ENCODE measurements at regions of chr6 and their contacts with region 1.

Region 1: GRCh38 chr6:159979136-159979874 is 10.4 kb downstream of the IGF2R start:
- DNase-seq: peak; percentile 82
- H3K4me3 Mint-ChIP-seq: peak overlapping the region; percentile 73
- H3K27ac Mint-ChIP-seq: peak overlapping the region; percentile 98
- H3K4me1 Mint-ChIP-seq: peaks cover 95% of the 10 kb centered on the region
- H3K27me3 Mint-ChIP-seq: no peaks in the 10 kb centered on the region

Region 2: DNA sequence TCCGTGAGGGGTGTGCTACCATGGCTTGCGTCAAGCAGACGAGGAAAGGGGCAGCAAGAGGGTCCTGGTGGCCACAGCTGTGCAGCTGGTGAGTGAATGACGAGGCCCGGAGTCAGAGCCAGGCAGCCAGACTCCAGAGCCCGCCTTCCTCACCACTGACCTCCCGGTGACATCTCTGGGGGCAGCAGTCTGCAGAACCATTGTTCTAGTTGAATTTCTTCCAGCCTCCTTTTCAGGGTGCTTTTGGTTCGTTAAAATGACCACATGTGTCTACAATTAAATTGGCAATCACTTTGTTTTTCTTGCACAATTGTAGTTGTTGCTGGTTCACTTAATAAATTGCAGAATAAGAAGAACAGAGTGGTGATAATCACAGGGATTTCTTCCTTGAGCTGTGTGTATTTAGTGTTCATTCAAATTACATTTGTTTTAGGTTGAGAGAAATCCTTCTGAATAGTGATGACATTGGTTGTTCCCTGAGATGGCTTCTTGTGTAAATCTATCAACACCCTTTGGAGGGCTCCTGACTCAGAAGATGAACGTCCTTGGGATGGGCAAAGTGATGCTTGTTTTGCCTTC is 1570.7 kb before region 1 on chr6:
- CTCF ChIA-PET with region 1: no interaction called
- POLR2A ChIA-PET with region 1: no interaction called
- intact Hi-C with region 1: no loop called
- DNase-seq: no peak
- H3K4me3 Mint-ChIP-seq: no peak overlapping the region
- H3K27ac Mint-ChIP-seq: no peak overlapping the region
- H3K4me1 Mint-ChIP-seq: no peaks in the 10 kb centered on the region
- H3K27me3 Mint-ChIP-seq: no peaks in the 10 kb centered on the region

Region 3: DNA sequence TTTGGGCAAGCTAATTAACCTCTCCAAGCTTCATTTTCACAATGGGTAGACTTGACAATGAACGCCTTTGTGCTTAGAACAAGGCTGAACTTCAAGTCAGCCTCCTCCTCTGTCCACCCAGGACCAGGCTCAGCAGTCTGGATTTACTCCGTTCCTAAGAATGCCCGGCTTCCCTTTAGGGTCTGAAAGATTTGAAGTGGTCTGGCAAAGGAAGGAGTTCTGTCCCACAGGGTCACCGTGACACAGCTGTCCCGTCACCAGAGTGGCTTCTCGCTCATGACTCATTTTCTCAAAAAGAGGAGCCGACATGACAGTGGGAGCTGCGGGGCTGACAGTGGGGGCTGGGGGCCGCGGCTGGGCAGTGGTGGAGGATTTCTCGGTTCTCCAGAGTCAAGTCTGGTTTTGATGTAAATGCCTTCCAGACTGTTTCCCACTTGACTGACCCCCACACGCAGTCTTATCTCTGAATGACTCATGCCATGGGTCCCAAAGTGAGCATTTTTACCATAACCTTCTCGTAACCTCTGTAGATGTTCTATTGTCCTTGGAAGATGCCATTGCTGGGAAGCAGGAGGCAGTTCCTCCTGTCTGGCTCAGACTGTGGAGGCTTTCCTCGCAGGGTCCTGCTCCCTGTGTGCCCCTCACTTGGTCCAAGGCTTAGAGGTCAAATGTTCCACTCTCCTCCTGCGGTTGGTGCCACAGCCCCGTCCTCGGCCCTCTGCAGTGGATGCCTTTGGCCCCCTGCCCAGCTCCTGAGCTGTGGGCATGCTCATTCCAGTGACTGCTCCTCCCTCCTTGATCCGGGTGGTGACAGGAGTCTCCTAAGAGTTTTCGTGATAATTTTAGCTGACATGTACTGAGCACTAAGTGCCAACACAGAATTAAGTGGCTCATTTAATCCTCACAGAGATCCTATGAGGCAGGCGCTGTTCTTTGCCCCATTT is 557.0 kb before region 1 on chr6:
- CTCF ChIA-PET with region 1: no interaction called
- POLR2A ChIA-PET with region 1: no interaction called
- intact Hi-C with region 1: no loop called
- DNase-seq: no peak
- H3K4me3 Mint-ChIP-seq: no peak overlapping the region
- H3K27ac Mint-ChIP-seq: no peak overlapping the region
- H3K4me1 Mint-ChIP-seq: no peaks in the 10 kb centered on the region
- H3K27me3 Mint-ChIP-seq: peaks cover 5% of the 10 kb centered on the region

Region 4: DNA sequence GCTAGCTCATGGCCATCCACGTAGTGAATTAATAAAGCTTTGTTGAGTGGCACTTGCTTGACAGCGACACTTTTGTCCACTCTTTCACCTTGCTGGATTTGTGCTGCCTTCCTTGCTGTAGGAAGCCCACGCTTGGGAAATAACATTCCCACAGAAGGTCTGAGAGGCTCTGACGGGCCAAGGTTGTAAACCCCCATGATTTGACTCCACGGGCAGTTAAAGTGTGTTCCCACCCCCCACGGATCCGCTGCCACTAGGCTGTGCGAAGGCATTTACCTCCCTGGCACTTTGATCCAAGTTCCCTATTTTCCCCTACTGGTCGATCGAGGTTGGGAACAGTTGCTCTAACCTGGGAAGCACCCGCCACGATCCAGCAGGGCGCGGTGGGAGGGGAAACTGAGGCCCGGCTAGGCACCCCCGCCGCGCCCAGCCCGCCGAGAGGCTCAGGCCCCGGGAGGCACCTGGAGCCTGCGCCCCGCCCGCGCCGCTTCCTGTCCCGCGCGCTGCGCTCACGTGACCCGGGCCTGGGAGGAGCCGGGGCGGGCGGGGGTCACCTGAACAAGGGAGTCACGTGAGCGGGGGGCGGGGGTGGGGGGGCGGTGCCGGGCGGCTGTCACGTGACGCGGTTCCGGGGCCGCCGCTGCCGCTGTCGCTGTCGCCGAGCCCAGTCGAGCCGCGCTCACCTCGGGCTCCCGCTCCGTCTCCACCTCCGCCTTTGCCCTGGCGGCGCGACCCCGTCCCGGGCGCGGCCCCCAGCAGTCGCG is 10.7 kb before region 1 on chr6 and contains the start of gene IGF2R:
- CTCF ChIA-PET with region 1: interaction called, 6 read pairs
- POLR2A ChIA-PET with region 1: interaction called, 8 read pairs
- intact Hi-C with region 1: loop called (anchors 1 kb)
- DNase-seq: peak; percentile 95
- H3K4me3 Mint-ChIP-seq: peak within 1 kb of the TSS; percentile 92
- H3K27ac Mint-ChIP-seq: peak within 1 kb of the TSS; percentile 92
- H3K4me1 Mint-ChIP-seq: peaks cover 40% of the 10 kb centered on the region
- H3K27me3 Mint-ChIP-seq: no peaks in the 10 kb centered on the region
- total RNA-seq, gene IGF2R: 73.5 to 75.5 TPM

Region 5: DNA sequence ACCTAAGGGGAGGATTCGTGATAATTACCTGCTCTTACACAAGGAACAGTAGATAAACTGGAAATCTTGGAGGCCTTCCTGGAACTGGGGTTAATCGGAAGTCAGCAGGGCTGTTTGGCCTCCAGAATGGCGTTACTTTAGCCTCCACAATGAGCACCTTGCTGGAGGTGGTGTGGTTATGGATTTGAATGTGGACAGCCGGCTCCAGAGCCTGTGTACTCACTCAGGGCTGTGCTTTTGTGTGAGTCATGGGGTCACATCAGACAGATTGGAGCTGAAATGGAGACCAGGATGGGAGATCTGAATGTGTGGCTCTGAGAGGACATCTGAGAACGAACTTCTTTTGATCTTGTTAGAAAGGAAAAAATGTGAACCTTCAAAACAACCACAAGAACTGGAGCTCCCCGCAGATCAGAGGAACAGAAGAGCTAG is 20.0 kb after region 1 on chr6:
- CTCF ChIA-PET with region 1: no interaction called
- POLR2A ChIA-PET with region 1: interaction called, 3 read pairs
- intact Hi-C with region 1: loop called (anchors 2 kb)
- DNase-seq: peak; percentile 27
- H3K4me3 Mint-ChIP-seq: no peak overlapping the region
- H3K27ac Mint-ChIP-seq: no peak overlapping the region
- H3K4me1 Mint-ChIP-seq: peaks cover 53% of the 10 kb centered on the region
- H3K27me3 Mint-ChIP-seq: no peaks in the 10 kb centered on the region

Region 6: GRCh38 chr6:160077526-160077925 is 98.2 kb after region 1 on chr6:
- CTCF ChIA-PET with region 1: no interaction called
- POLR2A ChIA-PET with region 1: no interaction called
- intact Hi-C with region 1: loop called (anchors 5 kb)
- DNase-seq: no peak
- H3K4me3 Mint-ChIP-seq: no peak overlapping the region
- H3K27ac Mint-ChIP-seq: no peak overlapping the region
- H3K4me1 Mint-ChIP-seq: peaks cover 12% of the 10 kb centered on the region
- H3K27me3 Mint-ChIP-seq: no peaks in the 10 kb centered on the region